Left cardiac atrium (tissue), 4 donors: ENCODE measurements at regions of chr1 and their contacts with region 1.

Region 1: GRCh38 chr1:229370601-229371021 is 27.8 kb upstream of the CCSAP start:
- DNase-seq: peak; percentile 82
- ATAC-seq: peak; percentile 89 to 95

Region 2: GRCh38 chr1:229325853-229326502 is 44.6 kb before region 1 on chr1:
- intact Hi-C with region 1: no loop called
- DNase-seq: no peak
- ATAC-seq: no peak

Region 3: DNA sequence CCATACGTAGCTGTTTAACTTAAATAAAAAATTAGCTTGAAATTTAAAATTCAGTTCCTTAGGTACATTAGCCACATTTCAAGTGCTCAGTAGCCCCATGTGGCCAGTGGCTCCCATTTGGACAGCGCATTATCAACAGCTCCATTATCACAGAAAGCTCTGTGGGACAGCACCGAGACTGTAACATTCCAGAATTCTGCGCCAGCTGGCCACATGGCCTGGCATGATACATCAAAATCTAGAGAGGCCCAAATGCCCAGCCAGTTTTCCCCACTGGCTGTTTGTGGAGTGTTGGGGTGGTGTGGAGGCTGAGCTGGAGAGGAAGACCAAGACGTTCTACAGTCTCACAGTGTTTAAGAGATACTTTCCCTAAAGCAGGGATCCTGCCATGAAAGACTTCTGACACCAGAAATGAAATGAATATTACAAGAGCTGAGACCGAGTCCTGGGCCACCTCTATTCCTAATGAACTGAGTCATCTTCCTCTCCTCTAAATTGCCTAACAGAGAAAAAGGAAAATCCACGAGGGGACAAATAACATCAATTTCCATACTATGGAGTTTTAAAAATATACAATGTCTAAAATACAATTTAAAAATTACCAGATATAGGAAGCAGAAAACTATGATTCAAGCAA is 90.5 kb after region 1 on chr1:
- intact Hi-C with region 1: loop called in 1 of 2 experiments (anchors 10 kb)
- DNase-seq: peak; percentile 45
- ATAC-seq: peak; percentile 83 to 94

Region 4: GRCh38 chr1:229479660-229480399 is 109.2 kb after region 1 on chr1:
- intact Hi-C with region 1: loop called in 1 of 2 experiments (anchors 5 kb)
- DNase-seq: no peak
- ATAC-seq: peak; percentile 20 to 42

Region 5: GRCh38 chr1:229507951-229508822 is 137.6 kb after region 1 on chr1 and contains the start of gene NUP133:
- intact Hi-C with region 1: no loop called
- DNase-seq: peak; percentile 100
- ATAC-seq: peak; percentile 99
- total RNA-seq, gene NUP133: 29.4 to 29.8 TPM